A673 (cell line): ENCODE measurements at regions of chr16 and their contacts with region 1.

Region 1: GRCh38 chr16:77171745-77172635 is 19.0 kb upstream of the MON1B start:
- DNase-seq: peak; percentile 74
- H3K4me3 ChIP-seq: no peak overlapping the region
- H3K27ac ChIP-seq: no peak overlapping the region
- H3K4me1 ChIP-seq: no peaks in the 10 kb centered on the region
- H3K27me3 ChIP-seq: peaks cover 25% of the 10 kb centered on the region
- CTCF ChIP-seq: peak; percentile 73

Region 2: DNA sequence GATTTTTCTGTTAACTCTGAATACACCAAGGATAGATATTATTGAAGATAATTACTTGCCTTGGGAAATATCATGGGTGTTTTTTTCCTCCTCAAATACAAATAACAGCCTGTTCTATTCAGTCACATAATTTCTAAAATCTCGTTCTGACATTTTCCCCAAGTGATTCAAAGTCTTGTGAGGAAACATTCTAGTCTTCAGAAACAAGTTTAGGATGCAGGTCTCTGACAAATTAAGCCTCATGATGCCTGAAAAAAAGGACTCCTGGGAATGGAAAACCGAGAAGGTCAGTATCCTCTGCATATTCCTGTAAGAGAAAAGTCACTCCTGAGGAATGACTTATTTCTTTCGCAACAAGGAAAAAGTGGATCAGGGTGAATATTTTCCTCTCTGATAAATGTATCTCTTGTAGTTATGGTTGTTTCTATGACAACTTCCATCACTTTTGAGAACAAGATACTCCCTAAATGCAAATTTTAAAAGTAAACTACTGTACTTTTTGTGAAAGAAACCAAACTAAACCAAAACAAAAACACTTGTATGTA is 510.2 kb before region 1 on chr16:
- CTCF ChIA-PET with region 1: no interaction called
- POLR2A ChIA-PET with region 1: no interaction called
- intact Hi-C with region 1: loop called (anchors 5 kb)
- DNase-seq: no peak
- H3K4me3 ChIP-seq: no peak overlapping the region
- H3K27ac ChIP-seq: no peak overlapping the region
- H3K4me1 ChIP-seq: no peaks in the 10 kb centered on the region
- H3K27me3 ChIP-seq: peaks cover 8% of the 10 kb centered on the region
- CTCF ChIP-seq: no peak

Region 3: DNA sequence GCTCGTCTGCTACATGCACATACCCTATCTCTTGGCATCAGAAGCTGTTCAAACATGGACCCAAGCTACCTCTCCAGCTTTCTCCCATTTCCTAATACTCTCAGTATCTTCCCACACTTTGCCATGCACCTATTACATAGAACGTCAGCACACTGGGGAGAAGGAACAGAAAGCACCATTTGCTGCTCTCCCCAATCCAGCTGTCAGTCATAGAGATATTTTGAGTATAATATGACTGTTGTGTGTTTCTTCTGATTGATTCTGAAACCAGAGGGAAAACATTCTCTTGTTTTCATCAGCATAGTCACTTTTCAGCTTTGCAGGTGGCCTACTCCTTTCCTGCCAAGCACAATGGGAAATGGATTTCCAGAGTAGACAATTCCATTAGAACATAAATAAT is 155.7 kb after region 1 on chr16:
- CTCF ChIA-PET with region 1: no interaction called
- POLR2A ChIA-PET with region 1: no interaction called
- intact Hi-C with region 1: no loop called
- DNase-seq: no peak
- H3K4me3 ChIP-seq: no peak overlapping the region
- H3K27ac ChIP-seq: no peak overlapping the region
- H3K4me1 ChIP-seq: no peaks in the 10 kb centered on the region
- H3K27me3 ChIP-seq: peaks cover 25% of the 10 kb centered on the region
- CTCF ChIP-seq: no peak